ENCODE measurements at regions of chr12 and their contacts with region 1.

Region 1: DNA sequence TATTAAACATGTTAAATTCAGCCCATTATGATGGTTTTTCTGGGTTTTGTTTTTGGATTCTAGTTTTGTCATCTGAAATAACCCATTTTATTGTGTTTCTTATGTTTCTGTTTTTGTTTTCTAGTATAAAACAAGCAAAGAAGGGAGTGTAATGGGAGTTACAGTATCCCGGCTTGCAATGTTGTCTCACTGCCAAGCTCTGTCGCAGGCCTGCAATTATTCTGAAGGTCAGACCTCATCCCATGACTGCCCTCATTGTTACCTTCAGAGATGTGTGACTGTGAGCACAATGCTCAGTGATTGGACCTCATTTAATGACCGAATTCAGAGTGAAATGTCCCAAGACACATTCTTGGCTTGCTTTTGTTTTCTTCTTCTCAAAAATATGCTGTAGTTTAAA is 73.0 kb upstream of the ATF1 start:
- DNase-seq: no peak
- ATAC-seq: peak in 3 of 4 donors; percentile 48 to 79 (median 52)
- H3K4me3 ChIP-seq: no peak overlapping the region
- H3K27ac ChIP-seq: no peak overlapping the region
- H3K4me1 ChIP-seq: no peaks in the 10 kb centered on the region
- H3K27me3 ChIP-seq: no peaks in the 10 kb centered on the region
- CTCF ChIP-seq: no peak

Region 2: GRCh38 chr12:50734409-50735263 is 43.7 kb after region 1 on chr12:
- intact Hi-C with region 1: loop called in 1 of 2 experiments (anchors 5 kb)
- DNase-seq: no peak
- ATAC-seq: peak in 3 of 4 donors; percentile 74 to 83 (median 76)
- H3K4me3 ChIP-seq: no peak overlapping the region
- H3K27ac ChIP-seq: no peak overlapping the region
- H3K4me1 ChIP-seq: no peaks in the 10 kb centered on the region
- H3K27me3 ChIP-seq: no peaks in the 10 kb centered on the region
- CTCF ChIP-seq: peak; percentile 65